Breast epithelium (tissue), 4 donors: ENCODE measurements at regions of chr17 and their contacts with region 1.

Region 1: DNA sequence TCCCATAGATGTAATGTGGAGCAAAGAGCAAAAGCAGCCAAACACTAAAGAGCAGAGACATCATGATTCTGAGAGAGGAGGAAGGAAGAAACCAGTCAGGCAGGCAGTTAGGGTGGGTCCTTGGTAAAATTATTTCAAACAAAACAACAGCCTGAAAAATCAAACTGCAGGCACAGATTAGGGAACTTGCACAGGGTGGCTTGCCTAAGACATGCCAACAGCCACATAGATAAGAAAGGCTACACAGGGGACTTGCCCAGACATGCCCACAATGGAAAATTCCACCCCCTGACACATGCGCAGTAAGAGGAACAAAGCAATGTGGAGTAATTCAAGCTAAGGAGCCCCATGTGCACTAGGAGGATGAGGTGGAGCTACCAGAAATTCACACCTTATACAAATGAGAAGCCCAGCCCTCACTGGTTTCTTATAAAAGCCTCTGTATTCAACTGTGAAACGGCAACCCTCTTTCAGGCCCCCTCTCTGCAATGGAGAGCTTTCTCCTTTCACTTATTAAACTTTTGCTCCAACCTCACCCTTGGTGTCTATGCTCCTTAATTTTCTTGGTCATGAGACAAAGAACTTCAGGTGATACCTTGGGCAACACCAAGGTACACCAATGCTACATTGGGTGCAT is 7.3 kb upstream of the GAS7 start:
- DNase-seq: no peak
- H3K4me3 ChIP-seq: no peak overlapping the region
- H3K27ac ChIP-seq: no peak overlapping the region
- H3K4me1 ChIP-seq: no peaks in the 10 kb centered on the region
- H3K27me3 ChIP-seq: no peaks in the 10 kb centered on the region
- CTCF ChIP-seq: no peak
- POLR2A ChIP-seq: no peak

Region 2: DNA sequence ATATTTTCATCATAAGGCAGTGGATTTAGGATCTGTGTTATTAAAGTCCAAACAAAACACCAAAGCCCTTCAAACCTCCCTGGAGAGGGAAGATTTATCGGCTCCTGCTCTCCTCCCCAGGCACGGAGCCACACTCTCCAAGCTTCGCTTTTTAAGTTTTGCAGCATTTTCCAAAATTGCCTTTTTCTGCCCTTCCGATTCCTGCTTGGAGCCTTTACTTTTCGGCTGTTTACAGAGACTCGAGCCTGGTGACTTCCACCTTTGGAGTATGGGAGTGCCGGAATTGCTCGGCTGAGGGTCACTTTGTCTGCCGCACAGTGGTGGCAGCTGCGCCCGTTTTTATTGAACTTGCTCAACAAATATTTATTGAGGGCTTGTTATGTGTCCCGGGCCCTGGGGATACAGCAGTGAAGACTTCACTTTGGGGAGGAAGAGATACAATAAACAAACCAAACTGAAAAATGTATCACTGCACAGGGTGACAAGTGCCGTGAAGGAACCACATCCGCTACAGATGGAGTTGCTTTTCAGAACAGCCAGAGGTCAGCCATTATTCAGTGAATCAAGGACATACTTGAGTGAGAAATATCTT is 998.8 kb before region 1 on chr17:
- intact Hi-C with region 1: loop called (anchors 5 kb)
- DNase-seq: peak in 1 of 2 donors; percentile 67
- H3K4me3 ChIP-seq: peak overlapping the region in 2 of 3 donors; percentile 3 to 23
- H3K27ac ChIP-seq: peak overlapping the region in 1 of 2 donors; percentile 38
- H3K4me1 ChIP-seq: no peaks in the 10 kb centered on the region
- H3K27me3 ChIP-seq: no peaks in the 10 kb centered on the region
- CTCF ChIP-seq: no peak
- POLR2A ChIP-seq: no peak

Region 3: GRCh38 chr17:10069301-10069700 is 136.4 kb before region 1 on chr17:
- intact Hi-C with region 1: no loop called
- DNase-seq: no peak
- H3K4me3 ChIP-seq: no peak overlapping the region
- H3K27ac ChIP-seq: peak overlapping the region; percentile 34 to 84
- H3K4me1 ChIP-seq: no peaks in the 10 kb centered on the region
- H3K27me3 ChIP-seq: no peaks in the 10 kb centered on the region
- CTCF ChIP-seq: no peak
- POLR2A ChIP-seq: no peak

Region 4: DNA sequence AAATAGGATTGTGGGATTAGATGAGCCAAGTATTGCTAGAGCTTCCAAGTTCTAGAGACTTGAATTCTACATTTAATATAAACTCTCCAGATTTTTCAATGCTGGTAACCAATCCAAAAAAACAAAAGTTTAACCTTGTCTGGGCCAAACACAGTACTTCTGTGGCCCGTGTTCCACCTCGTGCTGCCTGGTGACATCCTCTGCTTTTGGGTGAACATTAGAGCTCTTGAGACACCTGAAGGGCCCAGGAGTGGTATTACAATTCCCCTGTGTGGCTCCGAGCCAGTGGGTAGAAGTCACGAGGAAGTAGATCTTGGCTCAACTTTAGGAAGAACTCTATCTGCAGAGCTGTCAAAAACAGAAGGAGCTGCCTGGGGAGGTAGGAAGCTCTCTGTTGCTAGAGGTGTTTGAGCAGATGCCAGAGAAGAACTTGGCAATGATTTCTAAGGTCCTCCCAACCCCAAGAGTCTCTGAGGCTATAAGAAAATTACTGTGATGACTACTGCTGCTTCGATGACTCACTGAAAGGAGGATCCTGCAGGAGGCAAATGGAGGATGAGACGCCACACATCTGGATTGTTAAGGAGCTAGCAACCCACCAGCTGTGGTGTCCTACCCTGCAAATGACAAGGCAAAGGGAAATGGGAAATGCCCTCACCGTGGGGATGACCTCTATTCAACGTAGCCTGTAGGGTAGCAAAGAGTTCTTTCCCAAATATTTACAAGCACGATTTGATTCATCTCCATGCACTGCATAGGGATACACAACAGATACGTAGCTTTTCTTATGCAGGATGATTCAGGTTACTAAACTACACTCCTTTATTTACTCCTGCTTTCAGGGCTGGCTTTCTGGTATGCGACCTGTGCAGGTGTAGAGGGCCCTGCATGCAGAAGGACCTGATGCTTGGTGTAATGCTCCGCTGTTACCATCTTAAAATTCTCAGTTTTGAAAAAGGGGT is 38.5 kb after region 1 on chr17:
- intact Hi-C with region 1: no loop called
- DNase-seq: no peak
- H3K4me3 ChIP-seq: no peak overlapping the region
- H3K27ac ChIP-seq: peak overlapping the region in 1 of 2 donors; percentile 19
- H3K4me1 ChIP-seq: no peaks in the 10 kb centered on the region
- H3K27me3 ChIP-seq: no peaks in the 10 kb centered on the region
- CTCF ChIP-seq: no peak
- POLR2A ChIP-seq: no peak

Region 5: DNA sequence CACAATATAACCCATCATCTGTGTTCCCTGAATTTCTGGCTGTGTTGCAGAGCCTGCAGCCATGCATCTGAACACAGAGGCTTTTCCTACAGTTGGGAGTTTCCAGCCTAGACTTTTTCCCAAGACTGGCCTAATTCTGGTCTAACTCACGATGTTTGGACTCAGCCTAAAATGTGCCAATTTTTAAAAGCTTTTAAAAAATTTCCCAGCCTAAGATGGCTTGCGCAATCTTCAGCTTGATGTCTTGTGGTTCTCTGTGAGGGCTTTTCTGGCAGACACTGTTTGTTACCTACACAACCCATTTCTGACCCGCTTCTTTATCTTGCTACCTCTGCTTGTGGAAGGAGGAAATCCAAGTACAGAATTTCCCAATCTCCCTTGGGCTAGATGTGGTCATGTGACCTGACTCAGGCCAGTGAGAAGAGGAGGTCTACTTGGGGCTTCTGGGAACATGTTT is 65.5 kb after region 1 on chr17:
- intact Hi-C with region 1: no loop called
- DNase-seq: no peak
- H3K4me3 ChIP-seq: no peak overlapping the region
- H3K27ac ChIP-seq: peak overlapping the region in 1 of 2 donors; percentile 63
- H3K4me1 ChIP-seq: no peaks in the 10 kb centered on the region
- H3K27me3 ChIP-seq: no peaks in the 10 kb centered on the region
- CTCF ChIP-seq: no peak
- POLR2A ChIP-seq: no peak